Heart left ventricle (tissue), 16 donors: ENCODE measurements at regions of chr1 and their contacts with region 1.

Region 1: GRCh38 chr1:64268653-64269557 is 65.5 kb downstream of the UBE2U start:
- DNase-seq: peak in 4 of 5 donors; percentile 64 to 73 (median 70)
- ATAC-seq: peak in 3 of 4 donors; percentile 69 to 79 (median 74)
- H3K4me3 ChIP-seq: no peak overlapping the region
- H3K27ac ChIP-seq: no peak overlapping the region
- H3K4me1 ChIP-seq: peaks cover 0 to 6% (median 0%) of the 10 kb centered on the region in 12 donors
- H3K27me3 ChIP-seq: no peaks in the 10 kb centered on the region
- CTCF ChIP-seq: peak; percentile 69 to 89 (median 81)
- POLR2A ChIP-seq: no peak

Region 2: DNA sequence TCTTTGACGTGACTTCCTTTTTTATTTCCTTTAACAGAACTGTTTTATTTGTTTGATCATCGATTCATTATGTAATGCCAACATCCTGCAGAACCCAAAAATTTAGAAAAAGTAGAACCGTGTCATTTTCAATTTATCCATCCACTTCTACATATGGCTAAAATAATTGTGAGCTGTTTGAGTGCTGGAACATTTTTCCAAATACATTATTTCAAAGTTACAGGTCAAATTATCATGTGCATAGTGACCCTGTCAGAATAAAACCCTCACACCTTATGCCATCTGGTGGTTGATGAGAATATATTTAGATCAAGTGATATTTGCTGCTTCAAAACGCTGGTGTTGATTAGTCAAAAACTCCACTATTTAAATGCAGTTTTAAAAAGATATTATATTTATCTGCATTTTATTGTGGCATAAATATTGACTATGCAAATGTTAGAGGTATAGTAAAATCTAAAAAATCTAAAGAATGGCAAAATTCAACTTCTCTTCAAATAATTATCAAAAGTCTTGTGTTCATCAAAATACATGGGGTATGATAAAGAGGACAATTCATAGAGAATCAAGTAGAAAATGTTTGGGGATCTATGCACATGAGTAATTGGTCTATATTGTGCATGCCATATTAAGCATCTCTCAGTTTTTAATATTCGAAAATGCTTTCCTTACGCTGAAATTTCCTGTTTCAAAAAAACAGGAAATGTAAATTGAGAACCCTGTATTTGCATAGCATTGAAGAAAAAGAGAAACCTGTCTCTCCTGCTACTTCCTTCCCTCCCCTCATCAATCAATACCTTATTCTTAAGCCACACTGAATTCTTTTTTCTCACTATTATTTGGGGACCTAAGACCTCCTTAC is 25.8 kb before region 1 on chr1:
- intact Hi-C with region 1: no loop called
- DNase-seq: no peak
- ATAC-seq: peak in 1 of 4 donors; percentile 49
- H3K4me3 ChIP-seq: no peak overlapping the region
- H3K27ac ChIP-seq: no peak overlapping the region
- H3K4me1 ChIP-seq: peaks cover 0 to 16% (median 3%) of the 10 kb centered on the region in 12 donors
- H3K27me3 ChIP-seq: no peaks in the 10 kb centered on the region
- CTCF ChIP-seq: peak; percentile 13 to 58 (median 42)
- POLR2A ChIP-seq: no peak

Region 3: DNA sequence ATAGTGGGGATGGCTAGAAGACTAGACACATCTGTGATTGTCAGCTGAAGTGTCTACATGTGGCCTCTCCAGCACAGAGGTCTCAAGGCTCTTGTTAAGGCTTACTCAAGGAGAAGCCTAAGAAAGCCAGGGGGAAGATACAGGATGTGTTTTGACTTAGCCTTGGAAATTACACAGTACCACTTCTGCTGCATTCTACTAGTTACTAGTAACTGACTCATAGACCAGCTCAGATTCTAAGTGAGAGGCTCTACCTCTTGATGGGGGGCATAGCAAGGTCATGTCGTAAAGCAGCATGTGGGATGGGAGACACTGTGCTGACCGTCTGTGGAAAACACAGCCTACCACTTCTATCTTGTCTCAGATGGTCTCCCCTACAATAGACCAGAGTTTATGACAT is 34.1 kb after region 1 on chr1:
- intact Hi-C with region 1: no loop called
- DNase-seq: no peak
- ATAC-seq: no peak
- H3K4me3 ChIP-seq: no peak overlapping the region
- H3K27ac ChIP-seq: no peak overlapping the region
- H3K4me1 ChIP-seq: no peaks in the 10 kb centered on the region
- H3K27me3 ChIP-seq: no peaks in the 10 kb centered on the region
- CTCF ChIP-seq: no peak
- POLR2A ChIP-seq: no peak

Region 4: DNA sequence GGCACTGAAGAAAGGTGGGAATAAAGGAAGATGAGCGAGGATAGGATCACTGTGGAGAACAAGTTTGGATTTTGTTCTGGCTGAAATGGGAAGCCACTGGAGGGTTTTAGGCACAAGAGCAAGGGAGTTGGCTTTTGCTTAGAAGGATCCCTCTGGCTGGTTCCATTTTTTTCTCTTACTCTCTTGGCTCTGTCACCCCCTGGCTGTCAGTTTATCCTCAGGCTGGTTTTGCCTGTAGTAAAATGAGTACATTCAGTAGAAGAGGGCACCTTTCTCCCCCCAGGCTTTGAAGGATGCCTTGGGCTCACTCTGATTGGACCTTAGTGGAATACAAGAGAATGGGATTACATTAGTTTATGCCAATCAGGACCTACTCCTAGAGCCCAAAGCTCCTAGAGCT is 218.2 kb after region 1 on chr1:
- intact Hi-C with region 1: loop called in 4 of 10 experiments (anchors 2 to 5 kb)
- DNase-seq: no peak
- ATAC-seq: no peak
- H3K4me3 ChIP-seq: no peak overlapping the region
- H3K27ac ChIP-seq: no peak overlapping the region
- H3K4me1 ChIP-seq: peaks cover 0 to 5% (median 0%) of the 10 kb centered on the region in 12 donors
- H3K27me3 ChIP-seq: no peaks in the 10 kb centered on the region
- CTCF ChIP-seq: peak in 5 of 12 donors; percentile 10 to 34 (median 22)
- POLR2A ChIP-seq: no peak

Region 5: DNA sequence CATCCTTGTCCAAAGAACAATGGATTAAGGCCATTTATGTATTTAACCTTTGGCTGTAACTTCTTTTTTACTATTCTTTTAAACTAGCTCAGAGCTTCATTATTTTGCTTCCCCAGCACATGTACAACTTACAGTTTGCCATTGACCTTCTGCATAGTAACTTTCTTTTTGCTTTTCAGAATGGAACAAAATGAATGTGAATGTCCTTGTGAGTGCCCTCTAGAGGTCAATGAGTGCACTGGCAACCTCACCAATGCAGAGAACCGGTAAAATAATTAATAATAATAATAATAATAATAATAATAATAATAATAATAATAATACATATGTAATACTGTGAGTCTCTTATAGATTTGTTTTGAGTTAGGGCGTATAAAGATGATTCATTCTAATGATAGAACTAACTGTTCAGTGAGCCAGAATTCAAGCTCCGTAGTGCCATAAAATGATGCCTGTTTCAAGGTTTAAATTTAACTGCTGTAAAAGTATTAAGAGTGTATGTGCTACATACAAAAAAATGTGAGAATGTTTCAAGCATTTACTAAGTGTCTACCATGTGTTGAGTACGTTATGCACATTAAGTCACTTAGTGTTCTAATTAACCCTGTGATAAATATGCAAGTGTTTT is 406.9 kb after region 1 on chr1:
- intact Hi-C with region 1: loop called (anchors 2 to 10 kb)
- DNase-seq: no peak
- ATAC-seq: no peak
- H3K4me3 ChIP-seq: no peak overlapping the region
- H3K27ac ChIP-seq: no peak overlapping the region
- H3K4me1 ChIP-seq: peaks cover 0 to 9% (median 0%) of the 10 kb centered on the region in 12 donors
- H3K27me3 ChIP-seq: no peaks in the 10 kb centered on the region
- CTCF ChIP-seq: peak; percentile 58 to 85 (median 72)
- POLR2A ChIP-seq: no peak

Region 6: GRCh38 chr1:64686828-64687724 is 418.2 kb after region 1 on chr1:
- intact Hi-C with region 1: loop called in 1 of 10 experiments (anchors 10 kb)
- DNase-seq: no peak
- ATAC-seq: peak in 3 of 4 donors; percentile 64 to 79 (median 75)
- H3K4me3 ChIP-seq: no peak overlapping the region
- H3K27ac ChIP-seq: no peak overlapping the region
- H3K4me1 ChIP-seq: peaks cover 0 to 17% (median 8%) of the 10 kb centered on the region in 12 donors
- H3K27me3 ChIP-seq: no peaks in the 10 kb centered on the region
- CTCF ChIP-seq: peak; percentile 77 to 92 (median 86)
- POLR2A ChIP-seq: no peak

Region 7: GRCh38 chr1:64823691-64824476 is 555.0 kb after region 1 on chr1:
- intact Hi-C with region 1: loop called (anchors 1 to 5 kb)
- DNase-seq: peak in 4 of 5 donors; percentile 34 to 61 (median 52)
- ATAC-seq: peak; percentile 53 to 71 (median 67)
- H3K4me3 ChIP-seq: peak overlapping the region in 4 of 12 donors; percentile 20 to 37 (median 29)
- H3K27ac ChIP-seq: no peak overlapping the region
- H3K4me1 ChIP-seq: peaks cover 0 to 28% (median 1%) of the 10 kb centered on the region in 12 donors
- H3K27me3 ChIP-seq: no peaks in the 10 kb centered on the region
- CTCF ChIP-seq: peak; percentile 74 to 91 (median 84)
- POLR2A ChIP-seq: no peak

Region 8: GRCh38 chr1:64834734-64835133 is 565.8 kb after region 1 on chr1:
- intact Hi-C with region 1: loop called in 3 of 10 experiments (anchors 5 kb)
- DNase-seq: no peak
- ATAC-seq: no peak
- H3K4me3 ChIP-seq: no peak overlapping the region
- H3K27ac ChIP-seq: no peak overlapping the region
- H3K4me1 ChIP-seq: peaks cover 0 to 6% (median 0%) of the 10 kb centered on the region in 12 donors
- H3K27me3 ChIP-seq: no peaks in the 10 kb centered on the region
- CTCF ChIP-seq: no peak
- POLR2A ChIP-seq: no peak

Region 9: GRCh38 chr1:65002508-65003315 is 733.8 kb after region 1 on chr1:
- intact Hi-C with region 1: loop called in 1 of 10 experiments (anchors 10 kb)
- DNase-seq: peak; percentile 79 to 91 (median 88)
- ATAC-seq: peak; percentile 56 to 93 (median 86)
- H3K4me3 ChIP-seq: peak overlapping the region; percentile 27 to 82 (median 67)
- H3K27ac ChIP-seq: peak overlapping the region; percentile 78 to 98 (median 92)
- H3K4me1 ChIP-seq: peaks cover 4 to 31% (median 16%) of the 10 kb centered on the region in 12 donors
- H3K27me3 ChIP-seq: no peaks in the 10 kb centered on the region
- CTCF ChIP-seq: peak in 1 of 12 donors; percentile 5
- POLR2A ChIP-seq: peak in 1 of 2 donors; percentile 42